Prostate gland (tissue), 2 donors: ENCODE measurements at regions of chr11 and their contacts with region 1.

Region 1: DNA sequence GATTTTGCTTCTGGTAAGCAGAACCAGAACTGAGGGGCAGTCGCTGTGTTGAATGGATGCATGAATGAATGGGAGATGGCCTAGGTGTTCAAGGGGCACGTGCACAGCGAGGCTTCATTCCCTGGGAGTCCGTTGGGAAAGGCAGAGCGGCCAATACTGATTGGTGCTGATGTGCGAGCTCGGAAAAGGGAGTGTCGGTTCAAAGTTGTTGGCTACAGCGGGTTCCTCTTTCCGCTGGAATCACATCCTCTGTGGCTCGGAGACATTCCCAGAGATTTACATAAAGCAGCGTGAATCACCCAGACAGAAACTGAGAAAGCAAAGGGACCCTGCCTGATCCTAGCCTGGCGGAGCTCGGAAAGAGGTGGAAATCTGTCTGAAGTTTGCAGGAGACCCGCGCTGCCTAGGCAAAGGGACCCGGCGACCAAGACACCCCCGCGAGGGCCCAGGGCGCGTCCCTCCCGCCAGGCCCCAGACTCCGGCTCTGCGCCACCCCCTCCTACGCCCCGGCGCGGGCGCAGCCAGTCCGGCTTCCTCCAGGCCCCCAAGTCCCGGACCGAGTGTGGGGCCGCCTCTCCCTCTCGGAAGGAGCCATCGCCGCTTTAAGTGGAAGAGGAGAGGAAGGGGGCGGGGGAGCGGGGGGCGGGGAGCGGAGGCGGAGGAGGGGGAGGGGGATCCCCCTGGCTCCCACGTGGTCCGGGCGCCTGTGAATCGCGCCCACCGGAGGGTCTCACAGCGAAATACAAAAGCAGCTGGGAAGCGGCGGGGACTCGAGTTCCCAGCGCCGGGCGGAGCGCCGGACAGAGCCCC is at the start of gene FJX1:
- DNase-seq: peak; percentile 23
- H3K4me3 ChIP-seq: peak within 1 kb of the TSS; percentile 49 to 57
- H3K27ac ChIP-seq: peak within 1 kb of the TSS; percentile 62 to 75
- H3K4me1 ChIP-seq: peaks cover 21% of the 10 kb centered on the region
- H3K27me3 ChIP-seq: no peaks in the 10 kb centered on the region
- CTCF ChIP-seq: no peak
- POLR2A ChIP-seq: no peak
- total RNA-seq, gene FJX1: 10.8 to 13.7 TPM

Region 2: GRCh38 chr11:35822815-35823495 is 205.1 kb after region 1 on chr11:
- intact Hi-C with region 1: loop called (anchors 5 kb)
- DNase-seq: no peak
- H3K4me3 ChIP-seq: no peak overlapping the region
- H3K27ac ChIP-seq: no peak overlapping the region
- H3K4me1 ChIP-seq: no peaks in the 10 kb centered on the region
- H3K27me3 ChIP-seq: no peaks in the 10 kb centered on the region
- CTCF ChIP-seq: no peak
- POLR2A ChIP-seq: no peak

Region 3: GRCh38 chr11:36034551-36035331 is 416.8 kb after region 1 on chr11:
- intact Hi-C with region 1: loop called (anchors 10 kb)
- DNase-seq: no peak
- H3K4me3 ChIP-seq: no peak overlapping the region
- H3K27ac ChIP-seq: peak overlapping the region; percentile 47 to 58
- H3K4me1 ChIP-seq: peaks cover 17% of the 10 kb centered on the region
- H3K27me3 ChIP-seq: no peaks in the 10 kb centered on the region
- CTCF ChIP-seq: no peak
- POLR2A ChIP-seq: no peak

Region 4: GRCh38 chr11:36131721-36132397 is 514.0 kb after region 1 on chr11:
- intact Hi-C with region 1: loop called (anchors 2 kb)
- DNase-seq: peak; percentile 55
- H3K4me3 ChIP-seq: no peak overlapping the region
- H3K27ac ChIP-seq: peak overlapping the region; percentile 32 to 42
- H3K4me1 ChIP-seq: no peaks in the 10 kb centered on the region
- H3K27me3 ChIP-seq: no peaks in the 10 kb centered on the region
- CTCF ChIP-seq: peak in 3 of 4 experiments; percentile 51 to 58 (median 54)
- POLR2A ChIP-seq: no peak

Region 5: DNA sequence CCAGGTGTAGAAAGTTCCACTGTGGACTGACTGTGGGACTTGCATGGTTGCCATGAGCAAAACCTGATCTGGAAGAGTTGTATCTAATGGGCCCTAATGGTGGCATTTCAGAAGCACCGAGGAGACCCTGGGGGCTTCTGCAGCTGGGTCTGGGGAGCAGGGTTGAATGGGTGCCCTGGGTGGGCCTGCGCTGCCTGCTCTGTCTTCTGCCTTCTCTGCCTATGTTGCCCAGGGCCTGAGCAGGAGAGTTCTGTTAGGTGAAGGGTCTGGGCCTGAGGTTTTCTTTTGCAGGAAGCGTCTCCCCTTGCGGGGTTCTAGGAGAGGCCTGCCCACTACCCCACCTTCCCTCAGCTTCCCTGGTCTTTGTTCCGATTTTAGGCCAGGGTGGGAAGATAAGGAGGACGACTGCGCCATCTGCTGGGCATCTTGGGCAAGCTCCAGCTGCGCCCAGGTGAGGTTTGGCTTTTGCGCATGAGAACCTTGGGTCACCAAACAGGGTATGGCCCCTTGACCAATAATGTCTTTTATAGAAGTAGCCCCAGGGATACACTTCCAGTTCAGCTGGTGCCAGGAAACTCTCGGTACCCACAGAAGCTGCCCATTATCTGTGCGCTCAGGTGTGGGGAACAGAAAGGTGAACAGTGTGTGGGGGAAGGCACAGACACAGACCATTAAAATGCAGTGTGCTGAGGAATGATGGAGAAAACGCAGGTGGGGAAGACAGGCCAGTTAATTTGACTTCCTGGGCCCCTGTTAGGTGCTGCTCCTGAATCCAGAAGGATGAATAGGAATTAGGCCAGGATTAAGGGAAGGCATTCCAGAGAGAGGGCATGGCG is 648.1 kb after region 1 on chr11:
- intact Hi-C with region 1: loop called (anchors 1 kb)
- DNase-seq: peak; percentile 26
- H3K4me3 ChIP-seq: no peak overlapping the region
- H3K27ac ChIP-seq: no peak overlapping the region
- H3K4me1 ChIP-seq: no peaks in the 10 kb centered on the region
- H3K27me3 ChIP-seq: no peaks in the 10 kb centered on the region
- CTCF ChIP-seq: peak; percentile 75 to 82 (median 80)
- POLR2A ChIP-seq: no peak

Region 6: GRCh38 chr11:36488096-36488495 is 870.2 kb after region 1 on chr11:
- intact Hi-C with region 1: loop called (anchors 10 kb)
- DNase-seq: no peak
- H3K4me3 ChIP-seq: no peak overlapping the region
- H3K27ac ChIP-seq: no peak overlapping the region
- H3K4me1 ChIP-seq: no peaks in the 10 kb centered on the region
- H3K27me3 ChIP-seq: no peaks in the 10 kb centered on the region
- CTCF ChIP-seq: no peak
- POLR2A ChIP-seq: no peak